ENCODE measurements at regions of chr9 and their contacts with region 1.

Region 1: GRCh38 chr9:9942764-9943424 is 669.9 kb downstream of the PTPRD start:
- DNase-seq: peak; percentile 40
- CTCF ChIP-seq: peak; percentile 96

Region 2: GRCh38 chr9:9605681-9606080 is 337.2 kb before region 1 on chr9:
- CTCF ChIA-PET with region 1: interaction called, 43 read pairs
- POLR2A ChIA-PET with region 1: no interaction called
- DNase-seq: no peak
- CTCF ChIP-seq: no peak

Region 3: GRCh38 chr9:9790216-9790872 is 152.6 kb before region 1 on chr9:
- CTCF ChIA-PET with region 1: interaction called, 10 read pairs
- POLR2A ChIA-PET with region 1: no interaction called
- DNase-seq: peak; percentile 19
- CTCF ChIP-seq: peak; percentile 75

Region 4: GRCh38 chr9:9904041-9904440 is 38.9 kb before region 1 on chr9:
- CTCF ChIA-PET with region 1: interaction called, 12 read pairs
- POLR2A ChIA-PET with region 1: no interaction called
- DNase-seq: no peak
- CTCF ChIP-seq: no peak

Region 5: GRCh38 chr9:9924376-9924775 is 18.5 kb before region 1 on chr9:
- CTCF ChIA-PET with region 1: interaction called, 27 read pairs
- POLR2A ChIA-PET with region 1: no interaction called
- DNase-seq: no peak
- CTCF ChIP-seq: no peak

Region 6: GRCh38 chr9:9970514-9970913 is 27.6 kb after region 1 on chr9:
- CTCF ChIA-PET with region 1: interaction called, 16 read pairs
- POLR2A ChIA-PET with region 1: no interaction called
- DNase-seq: no peak
- CTCF ChIP-seq: no peak